ENCODE measurements at regions of chr18 and their contacts with region 1.

Region 1: DNA sequence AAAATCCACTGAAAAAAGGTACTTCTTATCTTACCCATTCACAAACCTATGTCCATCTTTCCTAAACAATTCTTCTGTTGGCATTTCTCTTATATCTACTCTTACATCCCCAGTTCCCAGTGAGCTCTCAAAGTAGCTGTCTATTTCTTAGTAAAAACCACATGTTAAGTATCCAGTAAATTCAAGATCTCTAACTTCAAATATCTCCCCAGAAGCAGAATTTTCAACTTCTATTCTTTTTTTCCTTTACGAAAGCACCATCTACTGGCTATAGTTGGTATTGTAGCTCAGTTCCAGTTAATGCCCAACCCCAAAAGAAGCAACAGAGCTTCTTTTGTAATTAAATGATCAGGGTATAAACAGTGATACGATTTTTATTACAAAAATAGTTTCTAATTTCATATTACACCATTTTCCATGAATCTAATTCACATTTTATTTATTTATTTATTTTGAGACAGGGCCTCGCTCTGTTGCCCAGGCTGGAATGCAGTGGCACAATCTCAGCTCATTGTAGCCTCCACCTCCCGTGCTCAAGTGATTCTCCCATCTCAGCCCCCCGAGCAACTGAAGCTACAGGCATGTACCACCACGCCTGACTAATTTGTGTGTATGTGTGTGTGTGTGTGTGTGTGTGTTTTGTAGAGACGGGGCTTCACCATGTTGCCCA is 28.5 kb downstream of the HRH4 start:
- H3K4me3 ChIP-seq: no peak overlapping the region
- H3K27ac ChIP-seq: no peak overlapping the region
- H3K4me1 ChIP-seq: no peaks in the 10 kb centered on the region
- CTCF ChIP-seq: 0 out of 2 replicates have a peak, but pooled peaks have one; percentile 6

Region 2: DNA sequence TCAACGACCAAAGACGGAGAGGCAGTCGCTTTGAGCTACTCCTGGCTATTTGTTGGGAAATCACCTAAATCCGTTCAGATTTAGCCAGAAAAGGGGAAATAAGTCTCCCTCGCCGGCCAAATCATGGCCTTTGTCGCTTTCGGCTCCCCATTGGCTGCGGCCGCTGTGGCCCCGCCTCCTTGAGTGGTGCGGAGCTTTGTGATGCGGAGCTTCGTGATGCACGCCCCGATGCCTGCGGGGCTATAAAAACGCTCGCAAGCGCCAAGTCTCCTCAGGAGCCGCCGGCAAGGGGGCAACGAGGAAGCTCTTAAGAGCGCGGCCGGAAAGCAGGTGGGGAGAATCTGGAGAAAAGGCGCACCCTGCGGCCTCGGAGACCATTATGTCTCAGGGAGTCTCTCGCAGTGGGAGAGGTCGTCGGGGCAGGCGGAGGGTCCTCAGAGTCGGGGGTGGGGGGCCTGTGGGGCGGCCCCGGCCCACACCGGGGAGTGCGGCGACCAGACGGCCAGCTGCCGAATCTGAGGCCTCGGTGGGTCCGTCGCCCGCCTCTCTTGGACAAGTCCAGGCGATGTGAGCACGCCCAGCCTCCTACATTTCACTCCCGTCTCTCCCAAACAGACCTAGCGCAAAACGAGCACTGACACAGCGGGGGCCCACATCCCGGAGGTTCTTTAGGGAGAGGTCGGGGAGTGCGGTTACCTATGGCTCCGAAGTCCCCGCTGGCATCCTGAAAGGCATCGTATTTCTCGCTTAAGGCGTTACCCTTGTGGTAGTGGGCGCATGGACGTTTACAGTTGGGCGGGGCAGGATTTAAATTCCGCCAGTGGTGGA is 350.0 kb before region 1 on chr18 and contains the start of gene CABYR:
- CTCF ChIA-PET with region 1: interaction called, 6 read pairs
- POLR2A ChIA-PET with region 1: interaction called, 11 read pairs
- H3K4me3 ChIP-seq: peak within 1 kb of the TSS; percentile 59
- H3K27ac ChIP-seq: peak within 1 kb of the TSS; percentile 77
- H3K4me1 ChIP-seq: peaks cover 4% of the 10 kb centered on the region
- CTCF ChIP-seq: no peak; the same call in 1 of the 2 replicates

Region 3: GRCh38 chr18:24362758-24363157 is 126.2 kb before region 1 on chr18:
- CTCF ChIA-PET with region 1: interaction called, 228 read pairs
- POLR2A ChIA-PET with region 1: no interaction called
- H3K4me3 ChIP-seq: no peak overlapping the region
- H3K27ac ChIP-seq: no peak overlapping the region
- H3K4me1 ChIP-seq: no peaks in the 10 kb centered on the region
- CTCF ChIP-seq: no peak

Region 4: DNA sequence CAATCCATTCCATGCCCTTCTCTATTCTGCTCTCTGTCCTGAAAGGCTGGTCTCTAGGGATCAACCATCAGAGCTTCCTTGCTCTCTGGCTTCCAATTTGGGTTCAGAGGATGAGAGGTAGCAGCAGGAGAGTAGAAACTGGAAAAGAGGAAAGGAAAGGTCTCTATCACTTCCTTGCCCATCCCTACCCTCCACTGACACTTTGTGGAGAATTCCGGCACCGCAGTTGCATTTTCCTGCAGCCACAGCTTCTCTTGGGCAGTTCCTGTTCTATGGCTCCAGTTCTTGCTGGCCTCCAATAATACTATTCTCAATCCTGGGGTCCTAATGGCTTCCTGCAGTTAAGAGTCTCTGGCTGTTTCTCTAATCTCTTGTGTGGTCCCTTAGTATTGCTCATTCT is 75.8 kb before region 1 on chr18:
- CTCF ChIA-PET with region 1: interaction called, 11 read pairs
- POLR2A ChIA-PET with region 1: no interaction called
- H3K4me3 ChIP-seq: no peak overlapping the region
- H3K27ac ChIP-seq: no peak overlapping the region
- H3K4me1 ChIP-seq: no peaks in the 10 kb centered on the region
- CTCF ChIP-seq: peak; percentile 38; the same call in 1 of the 2 replicates

Region 5: DNA sequence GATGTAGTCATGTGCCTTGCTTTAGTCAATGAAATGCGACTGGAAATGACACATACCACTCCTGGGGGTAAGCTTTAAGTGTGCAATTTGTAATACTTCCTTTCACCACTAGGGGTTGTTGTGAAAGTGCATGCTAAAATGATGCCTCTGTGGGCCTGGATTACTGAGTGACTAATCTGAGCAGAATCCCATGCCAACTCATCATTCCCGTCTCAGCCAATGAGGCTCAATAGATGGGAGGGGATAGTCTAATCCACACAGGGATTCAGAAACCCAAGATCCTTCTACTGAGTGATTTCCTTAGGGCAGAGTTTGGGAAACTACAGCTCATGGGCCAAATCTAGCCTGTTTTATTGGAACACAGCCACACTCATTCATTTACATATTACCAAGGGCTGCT is 25.5 kb after region 1 on chr18:
- CTCF ChIA-PET with region 1: interaction called, 24 read pairs
- POLR2A ChIA-PET with region 1: no interaction called
- H3K4me3 ChIP-seq: no peak overlapping the region
- H3K27ac ChIP-seq: no peak overlapping the region
- H3K4me1 ChIP-seq: no peaks in the 10 kb centered on the region
- CTCF ChIP-seq: no peak

Region 6: GRCh38 chr18:24726727-24727492 is 238.0 kb after region 1 on chr18:
- CTCF ChIA-PET with region 1: interaction called, 52 read pairs
- POLR2A ChIA-PET with region 1: interaction called, 3 read pairs
- H3K4me3 ChIP-seq: no peak overlapping the region
- H3K27ac ChIP-seq: no peak overlapping the region
- H3K4me1 ChIP-seq: no peaks in the 10 kb centered on the region
- CTCF ChIP-seq: peak; percentile 52; the same call in 1 of the 2 replicates